ENCODE measurements at regions of chr2 and their contacts with region 1.

Region 1: GRCh38 chr2:20578895-20579825 is 71.7 kb downstream of the HS1BP3 start:
- DNase-seq: peak; percentile 82 to 88
- ATAC-seq: peak; percentile 95 to 96 (median 96)
- H3K4me3 ChIP-seq: peak overlapping the region; percentile 13
- H3K27ac ChIP-seq: peak overlapping the region; percentile 84
- H3K4me1 ChIP-seq: peaks cover 32% of the 10 kb centered on the region
- H3K27me3 ChIP-seq: no peaks in the 10 kb centered on the region
- CTCF ChIP-seq: no peak

Region 2: DNA sequence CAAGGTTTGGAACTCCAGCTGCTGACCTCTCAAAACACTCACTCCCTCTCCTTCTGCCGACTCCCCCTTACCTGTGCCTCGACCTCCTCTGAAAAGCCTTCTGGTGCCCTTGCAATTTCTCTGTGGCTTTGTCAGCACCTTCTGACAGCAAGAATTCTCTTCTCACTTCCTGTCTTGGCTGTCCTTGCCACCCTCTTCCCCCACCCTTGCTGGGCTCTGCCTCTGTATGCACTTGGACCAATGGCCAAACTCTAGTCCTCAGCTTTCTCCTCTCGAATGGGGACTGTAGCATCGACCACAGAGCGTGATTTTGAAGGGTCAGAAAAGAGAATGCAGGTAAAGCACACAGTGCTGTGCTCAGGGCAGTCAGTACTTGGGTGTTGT is 27.2 kb before region 1 on chr2:
- intact Hi-C with region 1: loop called in 1 of 2 experiments (anchors 2 kb)
- DNase-seq: no peak
- ATAC-seq: peak; percentile 14 to 44 (median 24)
- H3K4me3 ChIP-seq: no peak overlapping the region
- H3K27ac ChIP-seq: peak overlapping the region; percentile 80
- H3K4me1 ChIP-seq: peaks cover 13% of the 10 kb centered on the region
- H3K27me3 ChIP-seq: no peaks in the 10 kb centered on the region
- CTCF ChIP-seq: no peak

Region 3: DNA sequence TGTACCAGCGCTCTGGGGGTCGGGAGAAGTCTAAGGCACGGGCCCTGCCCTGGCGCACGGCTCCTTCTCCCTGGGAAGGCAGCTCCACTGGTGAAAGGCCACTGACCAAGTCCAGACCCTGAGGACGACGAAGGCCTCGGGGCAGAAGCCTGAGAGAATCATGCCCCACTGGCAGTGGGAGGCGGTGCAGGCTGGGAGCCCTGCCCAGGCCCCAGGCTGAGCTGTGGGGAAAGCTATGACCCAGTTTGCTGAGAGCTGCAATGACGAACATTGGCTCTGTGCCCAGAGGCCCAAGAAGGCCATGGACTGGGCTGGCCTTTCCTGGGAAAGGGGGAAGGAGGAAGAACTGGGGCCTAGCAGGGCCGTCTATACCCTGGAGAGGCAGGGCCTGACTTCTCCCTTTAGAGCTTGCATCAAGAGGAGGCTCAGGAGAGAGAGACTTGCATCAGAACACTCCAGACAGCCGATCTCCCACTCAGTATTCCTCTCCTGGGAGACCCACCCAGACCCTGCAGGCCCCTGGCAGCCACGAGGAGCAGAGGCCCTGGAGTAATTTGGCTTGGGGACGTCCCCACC is 38.8 kb after region 1 on chr2:
- intact Hi-C with region 1: loop called in 1 of 2 experiments (anchors 2 kb)
- DNase-seq: peak; percentile 98 to 99
- ATAC-seq: peak; percentile 80 to 83 (median 80)
- H3K4me3 ChIP-seq: no peak overlapping the region
- H3K27ac ChIP-seq: peak overlapping the region; percentile 88
- H3K4me1 ChIP-seq: peaks cover 75% of the 10 kb centered on the region
- H3K27me3 ChIP-seq: no peaks in the 10 kb centered on the region
- CTCF ChIP-seq: peak; percentile 76